A549 (cell line): ENCODE measurements at regions of chr19 and their contacts with region 1.

Region 1: GRCh38 chr19:35702223-35703012 is 1.9 kb upstream of the ZBTB32 start:
- DNase-seq: peak; percentile 100
- ATAC-seq: peak; percentile 98 to 99
- H3K4me3 ChIP-seq: peak overlapping the region; percentile 53
- H3K27ac ChIP-seq: peak overlapping the region; percentile 52 to 80
- H3K4me1 ChIP-seq: no peaks in the 10 kb centered on the region
- CTCF ChIP-seq: no peak
- EP300 ChIP-seq: no peak
- POLR2A ChIP-seq: peak; percentile 41
- RAD21 ChIP-seq: no peak

Region 2: GRCh38 chr19:35716801-35717666 is 14.6 kb after region 1 on chr19:
- CTCF ChIA-PET with region 1: interaction called, 161 read pairs
- POLR2A ChIA-PET with region 1: interaction called, 14 read pairs
- DNase-seq: peak; percentile 95 to 99
- ATAC-seq: peak; percentile 74 to 91
- H3K4me3 ChIP-seq: peak overlapping the region; percentile 87
- H3K27ac ChIP-seq: peak overlapping the region; percentile 91 to 98
- H3K4me1 ChIP-seq: peaks cover 20% of the 10 kb centered on the region
- CTCF ChIP-seq: peak; percentile 100
- EP300 ChIP-seq: no peak
- POLR2A ChIP-seq: peak; percentile 74
- RAD21 ChIP-seq: peak; percentile 89 to 99